Thyroid gland (tissue), 4 donors: ENCODE measurements at regions of chr14 and their contacts with region 1.

Region 1: DNA sequence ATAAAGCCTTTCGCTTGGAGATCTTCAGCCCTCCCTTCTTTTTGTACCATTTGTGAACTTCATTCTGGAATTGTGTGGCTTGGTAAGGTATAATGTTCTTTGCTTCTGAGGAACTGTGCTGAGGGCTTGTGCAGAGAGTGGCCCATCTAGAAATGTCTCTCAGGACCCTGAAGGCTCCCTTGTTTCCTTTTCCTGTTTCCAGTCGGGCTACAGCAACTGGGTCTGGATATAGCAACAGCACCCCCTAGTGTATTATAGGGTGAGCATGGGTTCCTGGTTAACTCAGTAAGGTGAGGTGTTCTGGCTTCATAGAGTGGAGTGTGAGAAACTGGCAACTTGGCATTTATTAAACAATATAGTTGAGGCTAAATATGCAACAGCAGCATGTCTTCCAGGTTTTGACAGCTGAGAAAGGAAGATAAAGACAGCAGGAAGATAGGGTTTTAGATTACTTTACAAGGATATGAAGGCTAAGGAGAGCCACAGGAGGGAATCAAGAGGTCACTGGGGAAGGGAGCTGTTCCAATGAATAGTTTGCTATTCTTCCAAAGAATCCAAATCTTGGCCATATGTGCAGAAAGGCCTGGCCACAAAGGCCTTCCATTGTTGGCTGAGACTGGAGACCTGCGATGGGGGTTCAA is 49.1 kb upstream of the RNU6-8 start:
- DNase-seq: peak; percentile 51 to 56
- H3K4me3 ChIP-seq: no peak overlapping the region
- H3K27ac ChIP-seq: peak overlapping the region in 2 of 3 donors; percentile 26 to 54
- H3K4me1 ChIP-seq: peaks cover 23 to 29% of the 10 kb centered on the region in 2 donors
- H3K27me3 ChIP-seq: no peaks in the 10 kb centered on the region
- CTCF ChIP-seq: peak; percentile 54 to 92 (median 86)
- POLR2A ChIP-seq: no peak

Region 2: DNA sequence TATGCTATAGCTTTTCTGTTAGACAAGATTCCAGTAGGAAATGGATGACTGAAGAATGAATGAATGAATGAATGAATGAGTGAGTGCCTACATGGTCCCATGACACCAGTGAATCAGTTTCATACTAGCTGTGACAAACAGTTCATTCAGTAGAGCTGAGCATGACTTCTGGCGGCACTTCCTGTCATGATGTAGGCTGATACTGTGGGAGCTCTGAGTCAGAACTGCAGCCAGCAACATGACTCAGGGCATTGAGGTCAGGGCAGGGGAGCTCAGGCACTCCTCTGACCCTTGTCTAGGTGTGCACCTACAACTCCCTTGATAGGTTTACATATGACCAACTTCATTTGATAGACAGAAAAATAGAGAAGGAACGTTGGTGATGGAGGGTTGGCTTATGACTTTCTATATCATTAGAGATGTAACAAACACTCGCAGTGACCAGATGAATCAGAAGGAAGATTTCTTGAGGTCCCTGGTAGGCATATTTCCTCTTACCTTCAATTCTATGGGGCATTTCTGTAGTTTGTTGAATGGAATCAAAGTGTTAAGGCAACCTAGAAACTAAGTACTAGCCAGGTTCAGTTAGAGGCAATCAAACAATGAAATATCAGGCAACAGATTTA is 314.3 kb before region 1 on chr14:
- intact Hi-C with region 1: loop called (anchors 10 kb)
- DNase-seq: no peak
- H3K4me3 ChIP-seq: no peak overlapping the region
- H3K27ac ChIP-seq: no peak overlapping the region
- H3K4me1 ChIP-seq: no peaks in the 10 kb centered on the region
- H3K27me3 ChIP-seq: no peaks in the 10 kb centered on the region
- CTCF ChIP-seq: no peak
- POLR2A ChIP-seq: no peak

Region 3: GRCh38 chr14:32076278-32077080 is 175.7 kb before region 1 on chr14:
- intact Hi-C with region 1: loop called (anchors 2 kb)
- DNase-seq: peak; percentile 97 to 98
- H3K4me3 ChIP-seq: peak overlapping the region; percentile 43 to 99 (median 96)
- H3K27ac ChIP-seq: peak overlapping the region; percentile 99 to 100 (median 99)
- H3K4me1 ChIP-seq: peaks cover 0 to 10% of the 10 kb centered on the region in 2 donors
- H3K27me3 ChIP-seq: no peaks in the 10 kb centered on the region
- CTCF ChIP-seq: peak in 1 of 6 experiments; percentile 13
- POLR2A ChIP-seq: peak; percentile 64 to 77

Region 4: GRCh38 chr14:32202998-32203882 is 48.9 kb before region 1 on chr14 and contains the start of gene RNU6-8:
- intact Hi-C with region 1: loop called (anchors 10 kb)
- DNase-seq: peak; percentile 93 to 94
- H3K4me3 ChIP-seq: peak within 1 kb of the TSS; percentile 36 to 75 (median 59)
- H3K27ac ChIP-seq: peak within 1 kb of the TSS; percentile 87 to 92 (median 90)
- H3K4me1 ChIP-seq: peaks cover 0 to 12% of the 10 kb centered on the region in 2 donors
- H3K27me3 ChIP-seq: no peaks in the 10 kb centered on the region
- CTCF ChIP-seq: peak in 1 of 6 experiments; percentile 4
- POLR2A ChIP-seq: peak; percentile 50 to 72
- total RNA-seq, gene RNU6-8: not detected

Region 5: DNA sequence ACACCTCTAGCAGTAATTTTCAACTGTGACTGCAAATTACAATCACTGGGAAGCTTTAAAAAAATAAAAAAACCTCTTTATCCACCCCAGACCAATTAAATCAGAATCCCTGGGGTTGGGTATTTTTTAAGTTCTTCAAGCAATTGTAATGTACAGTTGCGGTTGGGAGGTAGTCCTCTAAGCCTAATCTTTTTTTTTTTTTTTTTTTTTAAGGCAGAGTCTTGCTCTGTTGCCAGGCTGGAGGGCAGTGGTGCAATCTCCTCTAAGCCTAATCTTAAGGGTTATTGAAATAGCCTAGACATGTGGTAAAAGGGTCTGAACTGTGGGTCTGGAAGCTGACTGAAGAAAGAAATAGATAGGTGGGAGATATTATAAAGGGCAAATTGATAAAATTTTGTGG is 307.4 kb after region 1 on chr14:
- intact Hi-C with region 1: loop called (anchors 10 kb)
- DNase-seq: no peak
- H3K4me3 ChIP-seq: no peak overlapping the region
- H3K27ac ChIP-seq: no peak overlapping the region
- H3K4me1 ChIP-seq: peaks cover 0 to 3% of the 10 kb centered on the region in 2 donors
- H3K27me3 ChIP-seq: no peaks in the 10 kb centered on the region
- CTCF ChIP-seq: no peak
- POLR2A ChIP-seq: no peak